MCF 10A (cell line): ENCODE measurements at regions of chr18 and their contacts with region 1.

Region 1: DNA sequence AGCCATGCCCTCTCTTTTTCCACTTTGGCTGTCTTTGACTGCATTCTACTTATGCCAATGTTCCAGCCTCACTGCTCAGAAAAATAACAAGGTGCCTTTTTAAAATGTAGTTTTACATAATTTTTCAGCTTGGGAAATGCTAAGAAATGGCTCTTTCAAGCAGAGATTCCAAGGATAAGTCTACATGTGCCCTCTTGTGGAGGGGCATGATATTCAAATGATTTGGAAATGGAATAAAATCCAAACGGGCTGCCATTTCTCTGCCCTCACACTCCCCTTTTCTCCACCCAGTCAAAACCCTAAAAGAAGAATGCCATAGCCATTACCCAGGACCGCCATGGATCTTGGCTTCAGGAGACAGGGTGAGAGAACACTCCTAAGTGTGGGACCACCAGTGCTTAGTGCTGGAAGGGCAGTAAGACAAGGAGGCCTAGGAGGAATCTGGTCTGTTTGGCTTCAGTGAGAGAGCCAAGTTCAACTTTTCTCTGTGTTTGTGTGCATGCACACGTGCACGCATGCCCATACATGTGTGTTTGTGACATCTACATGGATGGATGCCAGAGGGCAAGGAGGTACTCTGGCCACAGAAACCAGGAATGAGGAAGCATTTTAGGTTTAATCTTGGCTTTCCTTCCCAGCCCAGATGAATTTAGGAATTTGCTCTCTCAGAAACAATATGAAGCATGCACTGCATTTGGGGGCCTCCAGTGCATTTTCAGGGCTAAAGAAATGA is 174.0 kb upstream of the SLC14A2 start:
- DNase-seq: peak; percentile 47
- H3K4me3 Mint-ChIP-seq: no peak overlapping the region
- H3K27ac Mint-ChIP-seq: peak overlapping the region; percentile 5
- H3K4me1 Mint-ChIP-seq: peaks cover 17% of the 10 kb centered on the region
- H3K27me3 Mint-ChIP-seq: no peaks in the 10 kb centered on the region
- CTCF ChIP-seq: peak; percentile 31

Region 2: DNA sequence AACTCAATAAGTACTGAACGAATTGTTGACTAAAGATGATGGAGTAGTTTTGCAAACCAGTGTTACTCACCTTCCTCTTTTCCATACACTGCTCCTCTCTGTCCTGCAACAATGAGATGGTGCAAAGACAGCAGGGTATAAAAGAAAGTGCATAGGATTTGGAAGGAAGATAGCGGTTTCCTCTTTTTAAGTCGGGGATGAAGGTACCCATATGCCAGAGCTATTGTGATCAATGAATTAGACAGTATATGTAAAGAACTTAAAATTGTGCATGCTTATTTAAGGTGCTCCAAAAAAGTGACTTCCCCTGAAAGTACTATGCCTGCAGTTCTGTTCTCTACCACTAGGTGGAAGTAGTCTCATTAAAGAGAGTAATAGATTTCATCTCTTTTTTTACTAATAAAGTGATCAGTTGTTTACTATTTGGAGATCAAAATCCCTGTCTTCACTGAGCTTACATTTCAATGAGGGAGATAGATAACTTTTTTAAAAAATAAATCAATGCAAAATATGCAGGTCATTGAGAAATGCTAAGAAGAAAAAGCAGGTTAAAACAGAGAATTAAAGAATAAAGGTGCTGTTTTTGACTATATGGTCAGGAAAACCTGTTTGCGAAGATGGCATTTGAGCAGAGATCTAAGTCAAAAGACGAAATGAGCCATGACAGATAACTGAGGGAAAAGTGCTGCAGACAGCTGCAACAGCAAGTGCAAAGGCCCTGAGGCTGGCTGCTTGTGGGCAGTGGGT is 165.7 kb before region 1 on chr18:
- CTCF ChIA-PET with region 1: interaction called, 5 read pairs
- POLR2A ChIA-PET with region 1: no interaction called
- intact Hi-C with region 1: loop called (anchors 2 kb)
- DNase-seq: peak; percentile 57
- H3K4me3 Mint-ChIP-seq: no peak overlapping the region
- H3K27ac Mint-ChIP-seq: no peak overlapping the region
- H3K4me1 Mint-ChIP-seq: no peaks in the 10 kb centered on the region
- H3K27me3 Mint-ChIP-seq: peaks cover under 1% of the 10 kb centered on the region
- CTCF ChIP-seq: peak; percentile 73